ENCODE measurements at regions of chr6 and their contacts with region 1.

Region 1: GRCh38 chr6:169640351-169640852 is 61.4 kb downstream of the WDR27 start:
- DNase-seq: no peak
- H3K4me3 ChIP-seq: no peak overlapping the region
- H3K27ac ChIP-seq: no peak overlapping the region
- H3K27me3 ChIP-seq: no peaks in the 10 kb centered on the region
- CTCF ChIP-seq: peak; percentile 55

Region 2: DNA sequence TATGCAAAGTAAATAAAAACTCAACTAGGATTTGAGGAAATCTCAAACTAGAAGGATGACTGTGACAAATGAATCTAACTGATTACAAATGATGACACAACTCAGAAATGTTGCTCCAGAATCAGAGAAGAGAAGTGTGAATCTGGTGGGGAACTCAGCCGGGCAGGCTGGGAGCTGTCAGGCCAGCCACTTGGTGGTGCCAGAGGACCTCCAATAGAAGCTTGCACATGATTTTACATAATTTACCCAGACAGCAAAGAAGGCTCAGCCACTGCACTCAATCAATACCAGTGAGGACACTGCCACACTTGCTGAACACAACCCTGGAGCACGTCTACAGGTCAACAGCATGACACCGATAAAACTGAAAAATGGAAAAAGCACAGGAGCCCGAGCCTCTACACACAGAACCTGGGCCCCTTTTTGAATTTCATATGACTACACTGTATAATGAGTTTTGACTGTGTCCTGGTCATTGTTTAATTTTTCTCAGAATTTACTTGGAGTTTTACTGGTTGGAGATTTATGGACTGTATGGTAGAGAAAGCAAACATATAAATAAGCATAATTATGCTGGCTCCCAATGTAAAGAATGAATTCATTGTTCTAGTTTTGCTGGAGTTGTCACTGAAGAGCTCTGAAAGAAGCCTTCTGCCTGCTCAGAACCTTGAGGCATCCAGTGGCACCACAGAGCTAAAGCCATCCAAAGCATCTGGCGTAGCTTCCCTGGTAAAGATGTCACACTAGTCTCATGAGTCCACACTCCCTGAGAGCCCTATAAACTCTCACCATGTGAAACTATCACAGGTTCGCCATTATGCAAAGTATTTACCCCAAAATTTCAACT is 683.3 kb before region 1 on chr6:
- CTCF ChIA-PET with region 1: interaction called, 10 read pairs
- POLR2A ChIA-PET with region 1: no interaction called
- DNase-seq: peak; percentile 47
- H3K4me3 ChIP-seq: no peak overlapping the region
- H3K27ac ChIP-seq: no peak overlapping the region
- H3K27me3 ChIP-seq: peaks cover 4% of the 10 kb centered on the region
- CTCF ChIP-seq: peak; percentile 91

Measured in AG04450 (cell line).